CD4-positive, alpha-beta memory T cell (primary cell): ENCODE measurements at regions of chr1 and their contacts with region 1.

Region 1: DNA sequence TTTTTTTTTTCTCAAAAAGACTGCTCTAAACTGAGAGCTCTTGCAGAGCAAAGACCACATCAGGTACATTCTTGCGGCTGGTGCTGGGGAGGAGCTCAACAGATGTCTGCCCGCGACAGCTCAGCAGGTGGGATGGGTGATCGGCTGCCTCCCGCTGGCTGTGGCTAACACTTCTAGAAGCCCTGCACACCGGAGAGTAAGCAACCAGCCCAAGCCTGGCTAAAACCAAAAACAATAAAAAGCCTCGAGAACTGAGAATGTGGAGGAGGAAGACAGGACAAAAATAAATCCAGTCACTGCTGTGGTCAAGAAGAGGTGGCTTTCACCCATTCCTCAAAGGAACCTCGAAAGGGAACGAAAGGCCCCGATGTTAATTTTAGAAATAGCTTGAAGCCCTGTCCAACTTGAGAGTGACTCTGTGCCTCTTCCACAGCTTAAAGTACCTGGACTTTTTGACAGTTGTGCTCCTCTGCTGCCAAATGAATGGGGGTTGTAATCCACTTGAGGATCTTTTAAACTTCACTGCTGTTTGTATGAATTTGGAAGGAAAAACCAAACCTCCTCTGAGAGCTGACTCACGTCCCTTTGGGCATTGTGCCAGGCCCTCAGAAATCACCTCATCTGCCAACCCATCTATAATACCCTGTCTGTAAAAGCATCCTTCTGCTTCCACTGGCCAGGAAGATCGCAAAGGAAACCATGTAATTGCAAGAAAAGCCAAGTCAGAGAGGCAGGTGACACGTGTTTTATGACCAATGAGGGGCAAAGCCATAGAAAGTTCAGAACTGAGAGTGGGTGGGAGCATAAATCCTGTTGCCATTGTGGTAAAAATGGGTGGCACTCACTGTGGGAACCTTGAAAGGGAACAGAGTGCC is 78.6 kb downstream of the KCNN3 start:
- DNase-seq: peak; percentile 82 to 94 (median 86)
- H3K4me3 ChIP-seq: peak overlapping the region in 1 of 2 donors; percentile 24
- H3K4me3 Mint-ChIP-seq: peak overlapping the region in 7 of 8 donors; percentile 68 to 87 (median 76)
- H3K27ac ChIP-seq: peak overlapping the region; percentile 40
- H3K27ac Mint-ChIP-seq: peak overlapping the region; percentile 61 to 92 (median 86)
- H3K4me1 ChIP-seq: peaks cover 28% of the 10 kb centered on the region
- H3K4me1 Mint-ChIP-seq: peaks cover 18 to 33% (median 24%) of the 10 kb centered on the region in 4 donors
- H3K27me3 ChIP-seq: no peaks in the 10 kb centered on the region
- H3K27me3 Mint-ChIP-seq: peaks cover 0 to 5% of the 10 kb centered on the region in 2 donors

Region 2: DNA sequence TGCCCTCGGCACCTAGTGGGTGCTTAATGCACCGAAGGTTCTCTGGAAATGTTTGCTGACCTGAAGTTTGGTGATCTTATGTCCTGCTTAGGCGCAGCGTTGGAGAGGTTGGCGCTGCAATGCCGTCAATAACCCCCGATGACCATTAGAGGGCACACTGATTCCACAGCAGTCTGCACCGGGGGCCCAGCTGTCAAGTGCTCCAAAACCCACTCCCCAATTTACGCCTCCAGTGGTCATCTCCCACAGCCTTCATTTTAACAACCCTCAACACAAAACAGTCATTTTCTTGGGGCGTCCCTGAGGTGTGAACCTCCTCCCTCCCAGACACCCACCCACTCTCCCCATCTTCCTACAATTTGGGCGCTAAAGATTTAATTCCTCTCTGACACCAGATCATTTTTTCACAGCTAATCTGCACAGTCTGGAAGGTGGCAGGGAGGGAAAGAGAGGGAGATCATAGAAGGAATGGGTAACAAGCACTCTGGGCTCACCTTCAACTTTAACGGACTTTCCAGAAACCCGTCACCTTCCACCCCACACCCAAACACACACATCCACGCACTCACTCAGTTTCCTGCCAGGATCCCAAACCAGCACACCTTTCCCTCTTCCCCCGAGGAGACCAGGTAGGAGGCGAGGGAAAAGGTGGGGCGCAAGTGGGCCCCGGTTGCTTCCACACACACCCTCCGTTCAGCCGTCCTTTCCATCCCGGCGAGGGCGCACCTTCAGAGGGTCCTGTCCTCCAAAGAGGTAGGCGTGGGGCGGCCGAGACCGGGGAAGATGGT is 1113.6 kb before region 1 on chr1:
- CTCF ChIA-PET with region 1: no interaction called
- POLR2A ChIA-PET with region 1: no interaction called
- intact Hi-C with region 1: no loop called
- DNase-seq: peak in 4 of 5 donors; percentile 41 to 51 (median 46)
- H3K4me3 ChIP-seq: peak overlapping the region; percentile 11 to 48
- H3K4me3 Mint-ChIP-seq: peak overlapping the region; percentile 77 to 91 (median 85)
- H3K27ac ChIP-seq: no peak overlapping the region
- H3K27ac Mint-ChIP-seq: peak overlapping the region in 3 of 7 donors; percentile 12 to 73 (median 71)
- H3K4me1 ChIP-seq: peaks cover 27% of the 10 kb centered on the region
- H3K4me1 Mint-ChIP-seq: peaks cover 15 to 21% (median 16%) of the 10 kb centered on the region in 4 donors
- H3K27me3 ChIP-seq: peaks cover 32% of the 10 kb centered on the region
- H3K27me3 Mint-ChIP-seq: peaks cover 28 to 32% of the 10 kb centered on the region in 2 donors

Region 3: GRCh38 chr1:154669464-154670282 is 121.9 kb before region 1 on chr1:
- CTCF ChIA-PET with region 1: interaction called, 8 read pairs
- POLR2A ChIA-PET with region 1: interaction called, 3 read pairs
- intact Hi-C with region 1: loop called (anchors 1 kb)
- DNase-seq: peak; percentile 65 to 73 (median 68)
- H3K4me3 ChIP-seq: no peak overlapping the region
- H3K4me3 Mint-ChIP-seq: no peak overlapping the region
- H3K27ac ChIP-seq: no peak overlapping the region
- H3K27ac Mint-ChIP-seq: no peak overlapping the region
- H3K4me1 ChIP-seq: no peaks in the 10 kb centered on the region
- H3K4me1 Mint-ChIP-seq: no peaks in the 10 kb centered on the region
- H3K27me3 ChIP-seq: no peaks in the 10 kb centered on the region
- H3K27me3 Mint-ChIP-seq: peaks cover 2% of the 10 kb centered on the region in 2 donors

Region 4: DNA sequence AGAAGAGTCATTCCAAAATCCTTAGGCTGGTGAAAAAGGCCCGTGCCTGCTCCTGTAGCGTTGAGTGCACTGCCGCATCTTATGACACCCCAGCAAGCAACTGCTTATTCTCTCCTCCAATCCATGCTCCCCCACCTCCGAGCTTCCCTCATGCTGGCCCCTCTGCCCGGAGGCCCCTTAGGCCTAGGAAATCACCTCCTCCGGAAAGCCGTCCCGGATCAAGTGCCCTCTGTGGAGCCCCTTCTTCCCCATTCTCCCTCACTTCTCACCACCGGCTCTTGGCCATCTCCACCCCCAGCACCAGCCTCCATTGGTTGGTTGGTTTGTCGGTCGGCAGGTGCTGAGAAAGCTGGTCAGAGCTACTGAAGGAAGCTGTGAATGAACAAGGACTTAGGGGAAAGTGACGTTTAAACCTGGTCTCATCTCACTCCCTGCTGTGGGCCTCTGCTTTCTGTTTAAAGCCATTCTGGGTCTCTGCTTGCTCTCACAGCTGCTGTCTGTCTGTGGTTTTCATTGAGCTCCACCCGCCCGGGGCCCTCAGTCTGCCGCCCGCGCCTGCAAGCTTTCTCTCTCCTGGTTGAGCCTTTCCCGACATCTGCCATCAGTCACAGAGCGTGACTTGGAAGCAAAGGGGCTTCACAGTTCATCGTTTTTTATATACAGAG is 43.7 kb before region 1 on chr1:
- CTCF ChIA-PET with region 1: interaction called, 3 read pairs
- POLR2A ChIA-PET with region 1: interaction called, 9 read pairs
- intact Hi-C with region 1: loop called (anchors 1 kb)
- DNase-seq: peak; percentile 29 to 55 (median 48)
- H3K4me3 ChIP-seq: peak overlapping the region in 1 of 2 donors; percentile 16
- H3K4me3 Mint-ChIP-seq: peak overlapping the region; percentile 51 to 92 (median 78)
- H3K27ac ChIP-seq: no peak overlapping the region
- H3K27ac Mint-ChIP-seq: peak overlapping the region; percentile 69 to 95 (median 88)
- H3K4me1 ChIP-seq: peaks cover 49% of the 10 kb centered on the region
- H3K4me1 Mint-ChIP-seq: peaks cover 29 to 42% (median 37%) of the 10 kb centered on the region in 4 donors
- H3K27me3 ChIP-seq: no peaks in the 10 kb centered on the region
- H3K27me3 Mint-ChIP-seq: peaks cover 2 to 4% of the 10 kb centered on the region in 2 donors

Region 5: DNA sequence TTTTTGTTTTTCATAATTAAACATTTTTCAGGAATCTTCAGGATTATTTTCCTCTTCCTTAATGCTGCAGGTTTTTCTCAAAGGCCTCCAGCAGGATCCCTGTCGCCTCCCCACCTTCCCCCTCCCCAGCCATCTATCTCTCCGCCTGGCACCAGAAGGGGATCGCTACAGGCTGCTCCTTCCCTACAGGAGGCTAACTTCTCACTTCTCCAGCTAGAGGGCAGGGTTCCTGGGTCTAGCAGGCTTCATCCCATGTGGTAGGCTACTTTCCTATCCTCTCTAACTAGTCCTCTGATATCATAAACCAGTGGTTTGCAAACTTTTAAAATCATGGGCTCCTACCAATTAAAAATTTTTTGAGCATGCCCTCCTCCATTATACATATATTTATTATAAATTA is 25.6 kb before region 1 on chr1:
- CTCF ChIA-PET with region 1: interaction called, 46 read pairs
- POLR2A ChIA-PET with region 1: interaction called, 4 read pairs
- intact Hi-C with region 1: loop called (anchors 1 kb)
- DNase-seq: peak in 1 of 5 donors; percentile 14
- H3K4me3 ChIP-seq: no peak overlapping the region
- H3K4me3 Mint-ChIP-seq: no peak overlapping the region
- H3K27ac ChIP-seq: no peak overlapping the region
- H3K27ac Mint-ChIP-seq: no peak overlapping the region
- H3K4me1 ChIP-seq: no peaks in the 10 kb centered on the region
- H3K4me1 Mint-ChIP-seq: no peaks in the 10 kb centered on the region
- H3K27me3 ChIP-seq: no peaks in the 10 kb centered on the region
- H3K27me3 Mint-ChIP-seq: peaks cover 0 to 9% of the 10 kb centered on the region in 2 donors

Region 6: GRCh38 chr1:154812911-154813816 is 21.6 kb after region 1 on chr1:
- CTCF ChIA-PET with region 1: no interaction called
- POLR2A ChIA-PET with region 1: no interaction called
- intact Hi-C with region 1: no loop called
- DNase-seq: no peak
- H3K4me3 ChIP-seq: no peak overlapping the region
- H3K4me3 Mint-ChIP-seq: no peak overlapping the region
- H3K27ac ChIP-seq: no peak overlapping the region
- H3K27ac Mint-ChIP-seq: no peak overlapping the region
- H3K4me1 ChIP-seq: no peaks in the 10 kb centered on the region
- H3K4me1 Mint-ChIP-seq: peaks cover 0 to 3% (median 0%) of the 10 kb centered on the region in 4 donors
- H3K27me3 ChIP-seq: no peaks in the 10 kb centered on the region
- H3K27me3 Mint-ChIP-seq: peaks cover 0 to 3% of the 10 kb centered on the region in 2 donors